ENCODE measurements at regions of chr17 and their contacts with region 1.

Region 1: DNA sequence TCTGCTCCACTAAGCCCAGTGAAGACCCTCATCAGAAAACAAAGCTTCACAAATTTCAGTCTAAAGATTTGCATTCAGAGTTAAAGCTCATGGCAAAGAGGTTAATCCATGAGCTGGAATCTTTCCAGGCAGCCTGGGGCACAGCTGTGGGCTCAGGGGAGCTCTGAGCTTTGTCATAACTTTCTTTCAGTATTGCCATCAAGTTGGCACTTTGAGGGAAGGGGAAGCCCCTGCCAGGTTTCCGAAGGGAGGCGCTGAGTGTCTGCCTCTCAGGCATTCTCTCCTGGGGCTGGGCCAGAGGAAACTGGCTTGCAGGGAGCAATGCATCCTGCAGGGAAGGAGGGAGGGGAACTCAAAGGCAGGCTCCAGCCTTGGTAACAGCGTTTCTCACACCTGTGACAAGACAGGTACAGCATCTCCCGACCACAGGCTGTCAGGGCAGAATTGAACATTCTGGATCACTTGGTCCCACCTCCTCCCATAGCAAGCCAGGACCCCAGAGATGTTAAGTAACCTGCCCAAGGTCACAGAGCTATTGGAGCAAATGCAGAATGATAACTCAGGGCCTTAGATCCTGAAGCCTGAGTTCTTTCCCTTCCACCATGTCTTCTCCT is 3.9 kb downstream of the LPO start:
- DNase-seq: no peak
- H3K4me3 ChIP-seq: no peak overlapping the region
- H3K27ac ChIP-seq: no peak overlapping the region
- H3K4me1 ChIP-seq: no peaks in the 10 kb centered on the region
- H3K27me3 ChIP-seq: no peaks in the 10 kb centered on the region
- CTCF ChIP-seq: no peak
- POLR2A ChIP-seq: no peak

Region 2: DNA sequence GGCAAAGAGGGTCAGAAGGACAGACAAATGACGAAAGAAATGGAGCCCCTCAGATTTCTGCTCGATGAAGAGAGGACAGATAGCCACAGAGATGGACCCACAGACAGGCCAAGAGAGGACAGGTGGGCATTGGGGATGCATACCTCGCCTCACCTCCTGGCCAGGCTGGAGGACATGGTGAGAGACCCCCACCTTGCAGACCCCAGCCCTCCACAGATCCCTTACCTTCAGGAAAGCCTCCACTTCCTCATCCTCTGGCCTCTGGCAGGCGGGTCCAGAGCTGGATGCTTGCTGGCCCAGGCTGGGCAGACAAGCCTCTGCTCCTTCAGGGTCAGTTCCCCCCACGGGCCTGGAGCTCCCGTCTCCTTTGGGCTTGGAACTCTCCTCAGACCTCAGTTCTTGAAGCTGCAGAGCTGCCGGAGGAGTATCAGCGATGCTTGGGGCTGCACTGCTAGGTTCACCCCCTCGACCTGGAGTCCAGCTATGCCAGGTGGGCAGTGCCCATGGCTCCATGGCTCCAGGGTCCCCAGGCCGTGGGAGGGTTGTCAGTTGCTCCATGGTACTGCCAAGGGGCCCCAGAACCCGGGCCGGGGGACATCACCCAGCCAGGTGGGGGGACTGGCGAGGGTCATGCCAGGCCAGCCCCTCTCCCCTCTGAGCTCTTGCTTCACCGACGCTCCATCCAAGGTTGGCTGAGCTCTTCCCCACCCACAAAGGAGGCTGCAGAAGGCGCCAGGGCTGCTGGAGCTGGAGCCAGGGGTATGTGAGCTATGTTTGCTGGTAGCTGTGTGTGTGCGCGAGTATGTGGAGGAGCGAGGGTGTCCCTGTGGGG is 85.3 kb after region 1 on chr17:
- intact Hi-C with region 1: loop called (anchors 1 kb)
- DNase-seq: no peak
- H3K4me3 ChIP-seq: no peak overlapping the region
- H3K27ac ChIP-seq: no peak overlapping the region
- H3K4me1 ChIP-seq: peaks cover 28% of the 10 kb centered on the region
- H3K27me3 ChIP-seq: no peaks in the 10 kb centered on the region
- CTCF ChIP-seq: no peak
- POLR2A ChIP-seq: no peak